ENCODE measurements at regions of chrX and their contacts with region 1.

Region 1: GRCh38 chrX:153794018-153794896 is at the starts of genes IDH3G and SSR4:
- DNase-seq: peak; percentile 96
- H3K4me3 ChIP-seq: peak within 1 kb of the TSS; percentile 39 to 84 (median 78)
- H3K27ac ChIP-seq: peak within 1 kb of the TSS; percentile 87
- H3K4me1 ChIP-seq: peaks cover 15% of the 10 kb centered on the region
- H3K27me3 ChIP-seq: no peaks in the 10 kb centered on the region
- CTCF ChIP-seq: no peak
- POLR2A ChIP-seq: peak; percentile 76
- total RNA-seq, gene IDH3G: 57.7 and 60.7 TPM in 2 replicates
- total RNA-seq, gene SSR4: 235 and 242 TPM in 2 replicates

Region 2: DNA sequence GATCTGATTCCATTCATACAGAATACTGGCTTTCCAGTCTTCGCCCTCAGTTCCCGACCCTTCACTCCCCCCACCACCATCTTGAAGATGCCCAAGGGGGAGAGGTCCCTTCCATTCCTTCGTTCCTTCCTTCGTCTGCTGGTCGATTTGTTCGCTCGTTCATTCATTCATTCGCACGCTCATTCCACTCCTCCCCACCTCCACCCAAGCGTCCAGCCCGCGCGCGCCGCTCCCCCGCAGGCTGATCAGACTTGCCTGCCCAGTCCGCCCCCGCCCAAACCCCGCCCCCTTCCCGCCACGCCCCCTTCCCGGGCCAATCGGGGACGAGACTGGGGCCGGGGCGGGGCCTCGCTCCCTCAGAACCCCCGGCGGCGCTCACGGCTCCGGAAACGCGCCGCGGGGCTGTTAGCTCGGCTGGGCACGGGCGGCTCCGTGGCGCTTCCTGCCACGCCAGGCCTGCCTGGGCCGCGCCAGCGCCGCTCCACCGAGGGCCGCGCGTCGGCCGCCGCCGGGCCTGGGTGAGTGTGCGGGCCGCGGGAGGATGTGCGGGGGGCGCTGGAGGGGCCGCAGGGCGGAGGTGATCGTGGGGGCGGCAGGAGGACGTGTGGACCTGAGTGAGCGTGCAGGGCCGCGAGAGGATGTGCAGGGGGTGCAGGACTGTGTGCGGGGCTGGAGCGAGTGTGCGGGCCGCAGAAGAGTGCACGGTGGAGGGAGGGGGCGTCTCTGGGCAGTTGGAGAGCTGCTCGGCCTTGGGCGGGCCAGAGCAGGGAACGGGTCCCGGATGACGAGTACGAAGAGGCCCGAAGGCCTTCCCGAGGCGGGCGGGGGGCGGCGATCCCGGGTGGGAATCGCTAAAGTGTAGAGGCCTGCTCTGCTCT is 460.2 kb before region 1 on chrX and contains the start of gene ZNF275:
- CTCF ChIA-PET with region 1: no interaction called
- POLR2A ChIA-PET with region 1: no interaction called
- dilution Hi-C with region 1: no loop called
- intact Hi-C with region 1: no loop called
- DNase-seq: peak; percentile 72
- H3K4me3 ChIP-seq: peak within 1 kb of the TSS; percentile 26 to 89 (median 51)
- H3K27ac ChIP-seq: peak within 1 kb of the TSS; percentile 19
- H3K4me1 ChIP-seq: no peaks in the 10 kb centered on the region
- H3K27me3 ChIP-seq: peaks cover 0 to 8% of the 10 kb centered on the region in 2 experiments
- CTCF ChIP-seq: no peak
- POLR2A ChIP-seq: peak; percentile 40
- total RNA-seq, gene ZNF275: 8.5 and 11.0 TPM in 2 replicates

Region 3: GRCh38 chrX:153714256-153714655 is 80.0 kb before region 1 on chrX:
- CTCF ChIA-PET with region 1: no interaction called
- POLR2A ChIA-PET with region 1: no interaction called
- dilution Hi-C with region 1: no loop called
- intact Hi-C with region 1: no loop called
- DNase-seq: no peak
- H3K4me3 ChIP-seq: no peak overlapping the region
- H3K27ac ChIP-seq: no peak overlapping the region
- H3K4me1 ChIP-seq: no peaks in the 10 kb centered on the region
- H3K27me3 ChIP-seq: no peaks in the 10 kb centered on the region
- CTCF ChIP-seq: no peak
- POLR2A ChIP-seq: no peak

Region 4: DNA sequence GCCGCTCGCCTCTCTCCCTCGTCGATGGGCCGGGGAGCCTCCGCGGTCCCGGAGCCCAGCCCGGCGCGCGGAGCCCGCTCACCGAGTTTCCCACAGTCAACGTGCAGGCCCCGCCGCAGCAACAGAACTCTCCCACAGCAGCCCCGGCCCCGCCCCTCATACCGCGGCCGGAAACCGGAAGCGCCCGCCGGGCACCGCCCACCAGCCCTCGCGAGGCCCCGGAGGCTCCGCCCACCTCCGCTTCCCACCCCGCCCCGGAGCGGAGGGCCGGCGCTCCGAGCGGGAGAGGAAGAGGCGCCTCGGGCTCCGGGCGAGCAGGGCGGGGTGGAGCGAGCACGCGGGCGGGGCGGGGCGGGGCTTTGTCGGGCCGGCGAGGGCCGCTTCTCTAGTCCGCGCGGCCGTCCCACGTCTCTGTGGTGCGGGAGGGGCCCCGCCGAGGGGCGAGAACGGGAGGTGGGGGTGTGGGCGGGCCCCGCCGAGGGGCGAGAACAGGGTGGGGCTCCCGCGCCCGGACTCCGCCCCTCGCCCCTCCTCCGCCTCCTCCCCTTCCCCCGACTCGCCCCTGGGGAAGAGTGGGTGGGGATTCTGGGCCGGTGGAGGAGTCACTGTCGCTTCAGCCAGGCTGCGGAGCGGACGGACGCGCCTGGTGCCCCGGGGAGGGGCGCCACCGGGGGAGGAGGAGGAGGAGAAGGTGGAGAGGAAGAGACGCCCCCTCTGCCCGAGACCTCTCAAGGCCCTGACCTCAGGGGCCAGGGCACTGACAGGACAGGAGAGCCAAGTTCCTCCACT is 69.8 kb before region 1 on chrX and contains the starts of genes ABCD1 and BCAP31:
- CTCF ChIA-PET with region 1: no interaction called
- POLR2A ChIA-PET with region 1: no interaction called
- dilution Hi-C with region 1: no loop called
- intact Hi-C with region 1: loop called (anchors 2 kb)
- DNase-seq: peak; percentile 84
- H3K4me3 ChIP-seq: peak within 1 kb of the TSS; percentile 41 to 73 (median 54)
- H3K27ac ChIP-seq: peak within 1 kb of the TSS; percentile 47
- H3K4me1 ChIP-seq: peaks cover 28% of the 10 kb centered on the region
- H3K27me3 ChIP-seq: no peaks in the 10 kb centered on the region
- CTCF ChIP-seq: no peak
- POLR2A ChIP-seq: peak; percentile 53
- total RNA-seq, gene ABCD1: 12.9 and 14.3 TPM in 2 replicates
- total RNA-seq, gene BCAP31: 198 and 203 TPM in 2 replicates

Region 5: GRCh38 chrX:153782313-153782712 is 11.9 kb before region 1 on chrX:
- CTCF ChIA-PET with region 1: no interaction called
- POLR2A ChIA-PET with region 1: no interaction called
- dilution Hi-C with region 1: no loop called
- intact Hi-C with region 1: no loop called
- DNase-seq: no peak
- H3K4me3 ChIP-seq: no peak overlapping the region
- H3K27ac ChIP-seq: no peak overlapping the region
- H3K4me1 ChIP-seq: no peaks in the 10 kb centered on the region
- H3K27me3 ChIP-seq: no peaks in the 10 kb centered on the region
- CTCF ChIP-seq: peak in 1 of 2 donors; percentile 2
- POLR2A ChIP-seq: no peak

Region 6: DNA sequence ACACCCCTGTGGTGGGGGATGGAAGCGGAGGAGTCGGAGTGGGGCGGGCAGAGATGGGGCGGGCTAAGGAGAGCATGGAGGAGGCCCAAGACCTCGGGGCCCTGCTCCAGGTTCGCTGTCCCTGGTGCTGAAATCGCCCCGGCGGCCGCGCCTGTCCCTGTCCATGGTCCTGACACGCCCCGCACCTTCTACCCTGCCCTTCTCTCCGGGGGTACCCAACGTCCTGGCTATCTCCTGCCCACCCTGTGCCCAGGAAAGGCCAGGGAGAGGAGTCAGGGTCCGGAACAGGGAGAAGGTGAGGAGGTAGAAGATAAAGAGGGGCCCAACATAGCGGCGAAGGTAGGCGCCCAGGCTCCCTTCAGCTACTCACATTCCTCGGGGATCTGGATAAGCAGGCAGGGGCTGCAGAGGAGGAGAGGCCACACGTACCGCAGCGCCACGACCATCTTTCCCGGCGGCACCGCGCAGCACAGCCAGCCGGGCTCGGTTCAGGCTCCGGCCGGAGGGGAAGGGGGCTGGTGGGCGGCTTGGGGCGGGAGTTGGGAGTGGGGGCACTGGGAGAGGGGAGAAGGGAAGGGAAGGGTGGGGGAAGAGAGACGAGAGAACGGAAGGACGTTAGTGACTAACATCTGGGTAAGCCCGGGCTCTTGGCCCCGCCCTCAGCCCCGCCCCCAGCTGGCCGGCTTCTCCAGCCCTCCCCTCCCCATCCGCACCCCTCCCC is 81.3 kb after region 1 on chrX:
- CTCF ChIA-PET with region 1: no interaction called
- POLR2A ChIA-PET with region 1: no interaction called
- dilution Hi-C with region 1: no loop called
- intact Hi-C with region 1: loop called (anchors 10 kb)
- DNase-seq: peak; percentile 39
- H3K4me3 ChIP-seq: no peak overlapping the region
- H3K27ac ChIP-seq: no peak overlapping the region
- H3K4me1 ChIP-seq: no peaks in the 10 kb centered on the region
- H3K27me3 ChIP-seq: peaks cover 3 to 5% of the 10 kb centered on the region in 2 experiments
- CTCF ChIP-seq: no peak
- POLR2A ChIP-seq: no peak

Measured in endothelial cell of umbilical vein (primary cell).